Dendritic cell treated with granulocyte-macrophage colony-stimulating factor and Interleukin-4, amounts not matched to agents 40 ng/mL and 50 ng/mL, for 4 days (primary cell): ENCODE measurements at regions of chr17 and their contacts with region 1.

Region 1: DNA sequence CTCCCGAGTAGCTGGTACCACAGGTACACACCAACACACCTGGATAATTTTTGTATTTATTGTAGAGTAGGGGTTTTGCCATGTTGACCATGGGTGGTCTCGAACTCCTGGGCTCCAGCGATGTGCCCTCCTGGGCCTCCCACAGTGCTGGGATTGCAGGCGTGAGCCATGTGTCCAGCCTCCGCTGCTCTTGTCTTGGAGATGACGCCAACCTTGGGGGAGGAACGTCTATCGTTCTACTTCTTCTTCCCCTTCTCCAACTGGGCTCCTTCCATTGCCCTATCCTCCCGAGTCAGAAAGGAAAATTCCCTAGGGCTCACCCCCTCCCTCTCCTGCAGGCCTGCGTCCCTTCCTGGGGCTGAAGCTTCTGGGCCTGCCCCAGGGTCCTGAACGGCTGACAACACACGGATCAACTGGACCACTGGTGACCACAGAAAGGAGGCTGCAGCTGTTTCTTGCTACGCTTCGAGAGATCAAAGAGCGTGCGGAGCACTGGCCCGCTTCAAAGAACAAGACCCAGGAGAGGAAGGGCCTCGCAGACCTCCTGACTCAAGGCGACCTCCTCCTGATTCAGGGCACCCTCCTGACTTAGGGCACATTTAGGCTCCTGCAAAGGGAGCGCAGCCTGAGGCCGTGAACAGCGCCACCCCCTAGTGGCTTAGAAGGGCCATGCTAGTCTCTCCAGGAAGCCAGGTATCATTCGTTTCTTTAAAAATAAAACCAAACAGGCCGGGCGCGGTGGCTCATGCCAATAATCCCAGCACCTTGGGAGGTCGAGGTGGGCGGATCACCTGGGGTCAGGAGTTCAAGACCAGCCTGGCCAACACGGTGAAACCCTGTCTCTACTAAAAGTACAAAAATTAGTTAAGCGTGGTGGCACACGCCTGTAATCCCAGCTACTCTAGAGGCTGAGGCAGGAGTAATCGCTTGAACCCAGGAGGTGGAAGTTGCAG is 48.5 kb upstream of the HELZ start:
- H3K4me3 Mint-ChIP-seq: peak overlapping the region; percentile 73
- H3K27ac Mint-ChIP-seq: peak overlapping the region; percentile 50
- H3K4me1 Mint-ChIP-seq: peaks cover 22% of the 10 kb centered on the region
- H3K27me3 Mint-ChIP-seq: no peaks in the 10 kb centered on the region

Region 2: GRCh38 chr17:67105213-67105612 is 188.3 kb before region 1 on chr17:
- intact Hi-C with region 1: no loop called
- H3K4me3 Mint-ChIP-seq: no peak overlapping the region
- H3K27ac Mint-ChIP-seq: peak overlapping the region; percentile 65
- H3K4me1 Mint-ChIP-seq: peaks cover 30% of the 10 kb centered on the region
- H3K27me3 Mint-ChIP-seq: no peaks in the 10 kb centered on the region

Region 3: GRCh38 chr17:67221062-67221998 is 72.2 kb before region 1 on chr17:
- intact Hi-C with region 1: loop called (anchors 1 kb)
- H3K4me3 Mint-ChIP-seq: no peak overlapping the region
- H3K27ac Mint-ChIP-seq: peak overlapping the region; percentile 50
- H3K4me1 Mint-ChIP-seq: peaks cover 37% of the 10 kb centered on the region
- H3K27me3 Mint-ChIP-seq: no peaks in the 10 kb centered on the region

Region 4: GRCh38 chr17:67245073-67245755 is 48.3 kb before region 1 on chr17 and contains the start of gene HELZ:
- intact Hi-C with region 1: loop called (anchors 2 kb)
- H3K4me3 Mint-ChIP-seq: peak within 1 kb of the TSS; percentile 87
- H3K27ac Mint-ChIP-seq: peak within 1 kb of the TSS; percentile 86
- H3K4me1 Mint-ChIP-seq: peaks cover 50% of the 10 kb centered on the region
- H3K27me3 Mint-ChIP-seq: peaks cover 6% of the 10 kb centered on the region